CD4-positive, alpha-beta memory T cell (primary cell): ENCODE measurements at regions of chr19 and their contacts with region 1.

Region 1: GRCh38 chr19:18007044-18007916 is 690 bp upstream of the ARRDC2 start:
- DNase-seq: peak; percentile 75 to 85 (median 79)
- H3K4me3 ChIP-seq: peak overlapping the region; percentile 18 to 68
- H3K4me3 Mint-ChIP-seq: peak overlapping the region; percentile 86 to 95 (median 90)
- H3K27ac ChIP-seq: peak overlapping the region; percentile 95
- H3K27ac Mint-ChIP-seq: peak overlapping the region; percentile 95 to 100 (median 97)
- H3K4me1 ChIP-seq: peaks cover 56% of the 10 kb centered on the region
- H3K4me1 Mint-ChIP-seq: peaks cover 10 to 59% (median 28%) of the 10 kb centered on the region in 4 donors
- H3K27me3 ChIP-seq: no peaks in the 10 kb centered on the region
- H3K27me3 Mint-ChIP-seq: no peaks in the 10 kb centered on the region

Region 2: GRCh38 chr19:18021121-18021755 is 14.0 kb after region 1 on chr19:
- CTCF ChIA-PET with region 1: interaction called, 4 read pairs
- POLR2A ChIA-PET with region 1: interaction called, 135 read pairs
- intact Hi-C with region 1: loop called (anchors 1 kb)
- DNase-seq: peak; percentile 57 to 91 (median 64)
- H3K4me3 ChIP-seq: no peak overlapping the region
- H3K4me3 Mint-ChIP-seq: peak overlapping the region; percentile 45 to 85 (median 68)
- H3K27ac ChIP-seq: peak overlapping the region; percentile 66
- H3K27ac Mint-ChIP-seq: peak overlapping the region; percentile 91 to 99 (median 96)
- H3K4me1 ChIP-seq: peaks cover 61% of the 10 kb centered on the region
- H3K4me1 Mint-ChIP-seq: peaks cover 41 to 76% (median 60%) of the 10 kb centered on the region in 4 donors
- H3K27me3 ChIP-seq: no peaks in the 10 kb centered on the region
- H3K27me3 Mint-ChIP-seq: no peaks in the 10 kb centered on the region

Region 3: GRCh38 chr19:18058208-18059030 is 51.1 kb after region 1 on chr19:
- CTCF ChIA-PET with region 1: interaction called, 148 read pairs
- POLR2A ChIA-PET with region 1: interaction called, 140 read pairs
- intact Hi-C with region 1: loop called (anchors 1 kb)
- DNase-seq: peak; percentile 75 to 85 (median 82)
- H3K4me3 ChIP-seq: no peak overlapping the region
- H3K4me3 Mint-ChIP-seq: peak overlapping the region in 5 of 8 donors; percentile 22 to 64 (median 39)
- H3K27ac ChIP-seq: peak overlapping the region; percentile 44
- H3K27ac Mint-ChIP-seq: peak overlapping the region; percentile 66 to 96 (median 88)
- H3K4me1 ChIP-seq: peaks cover 11% of the 10 kb centered on the region
- H3K4me1 Mint-ChIP-seq: peaks cover 9 to 15% (median 12%) of the 10 kb centered on the region in 4 donors
- H3K27me3 ChIP-seq: no peaks in the 10 kb centered on the region
- H3K27me3 Mint-ChIP-seq: no peaks in the 10 kb centered on the region

Region 4: DNA sequence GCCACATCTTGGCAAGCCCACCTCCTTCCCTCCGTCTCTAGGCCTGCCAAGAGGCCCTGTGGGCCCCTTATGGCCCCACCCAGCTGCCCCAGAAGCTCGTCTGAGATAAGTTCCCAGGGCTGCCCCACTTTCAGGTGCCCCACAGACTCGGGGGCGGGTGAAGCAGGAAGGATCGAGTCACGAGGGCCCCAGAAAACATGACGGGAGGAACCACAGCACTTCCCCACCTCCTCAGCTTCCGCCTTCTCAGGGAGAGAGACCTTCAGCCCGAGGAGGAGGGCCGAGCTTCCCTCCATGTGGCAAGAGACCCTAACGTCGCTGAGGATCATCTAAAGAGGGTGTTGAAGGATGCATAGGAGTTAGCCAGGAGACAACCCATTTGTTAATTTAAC is 83.9 kb after region 1 on chr19:
- CTCF ChIA-PET with region 1: interaction called, 6 read pairs
- POLR2A ChIA-PET with region 1: interaction called, 25 read pairs
- intact Hi-C with region 1: no loop called
- DNase-seq: peak; percentile 81 to 91 (median 83)
- H3K4me3 ChIP-seq: peak overlapping the region in 1 of 2 donors; percentile 16
- H3K4me3 Mint-ChIP-seq: peak overlapping the region in 7 of 8 donors; percentile 68 to 83 (median 75)
- H3K27ac ChIP-seq: peak overlapping the region; percentile 85
- H3K27ac Mint-ChIP-seq: peak overlapping the region; percentile 98 to 100 (median 99)
- H3K4me1 ChIP-seq: peaks cover 68% of the 10 kb centered on the region
- H3K4me1 Mint-ChIP-seq: peaks cover 39 to 76% (median 55%) of the 10 kb centered on the region in 4 donors
- H3K27me3 ChIP-seq: no peaks in the 10 kb centered on the region
- H3K27me3 Mint-ChIP-seq: no peaks in the 10 kb centered on the region

Region 5: GRCh38 chr19:18167975-18168645 is 160.8 kb after region 1 on chr19:
- CTCF ChIA-PET with region 1: interaction called, 4 read pairs
- POLR2A ChIA-PET with region 1: no interaction called
- intact Hi-C with region 1: loop called (anchors 1 kb)
- DNase-seq: peak in 4 of 5 donors; percentile 56 to 62 (median 56)
- H3K4me3 ChIP-seq: no peak overlapping the region
- H3K4me3 Mint-ChIP-seq: no peak overlapping the region
- H3K27ac ChIP-seq: no peak overlapping the region
- H3K27ac Mint-ChIP-seq: peak overlapping the region in 6 of 7 donors; percentile 4 to 70 (median 34)
- H3K4me1 ChIP-seq: peaks cover under 1% of the 10 kb centered on the region
- H3K4me1 Mint-ChIP-seq: peaks cover 2 to 8% (median 4%) of the 10 kb centered on the region in 4 donors
- H3K27me3 ChIP-seq: no peaks in the 10 kb centered on the region
- H3K27me3 Mint-ChIP-seq: no peaks in the 10 kb centered on the region

Region 6: DNA sequence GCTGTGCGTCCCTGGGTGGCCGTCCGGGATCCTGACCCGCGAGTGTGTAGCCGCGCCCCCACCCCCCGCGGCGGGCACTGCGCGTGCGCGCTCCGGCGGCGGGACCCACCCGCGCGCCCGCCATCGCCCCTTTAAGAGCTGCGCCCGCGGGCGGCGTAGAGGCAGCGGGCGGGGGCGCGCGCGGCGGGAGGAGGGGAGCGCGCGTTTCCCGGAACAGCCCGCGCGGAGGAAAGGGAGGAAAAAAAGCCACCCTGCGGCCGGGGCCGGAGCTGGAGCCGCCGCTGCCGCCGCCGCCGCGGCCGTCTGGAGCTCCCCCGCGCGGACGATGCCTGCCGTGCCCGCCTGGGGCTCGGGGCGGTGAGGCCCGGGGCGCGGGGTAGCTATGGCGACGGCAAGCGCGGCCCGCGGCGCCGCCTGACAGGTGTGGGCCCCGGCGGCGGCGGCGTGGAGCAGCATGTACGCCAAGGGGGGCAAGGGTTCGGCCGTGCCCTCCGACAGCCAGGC is 412.0 kb after region 1 on chr19 and contains the start of gene SSBP4:
- CTCF ChIA-PET with region 1: no interaction called
- POLR2A ChIA-PET with region 1: interaction called, 3 read pairs
- intact Hi-C with region 1: loop called (anchors 10 kb)
- DNase-seq: peak; percentile 76 to 83 (median 81)
- H3K4me3 ChIP-seq: peak within 1 kb of the TSS; percentile 29 to 64
- H3K4me3 Mint-ChIP-seq: peak within 1 kb of the TSS; percentile 92 to 96 (median 94)
- H3K27ac ChIP-seq: peak within 1 kb of the TSS; percentile 70
- H3K27ac Mint-ChIP-seq: peak within 1 kb of the TSS; percentile 96 to 98 (median 97)
- H3K4me1 ChIP-seq: peaks cover 87% of the 10 kb centered on the region
- H3K4me1 Mint-ChIP-seq: peaks cover 62 to 90% (median 76%) of the 10 kb centered on the region in 4 donors
- H3K27me3 ChIP-seq: no peaks in the 10 kb centered on the region
- H3K27me3 Mint-ChIP-seq: peaks cover 2 to 5% of the 10 kb centered on the region in 2 donors
- total RNA-seq, gene SSBP4: 71.3 to 73.4 TPM